ENCODE measurements at regions of chr2 and their contacts with region 1.

Region 1: GRCh38 chr2:163465440-163465839 is 270.4 kb downstream of the FIGN start:
- DNase-seq: no peak
- H3K4me3 ChIP-seq: no peak overlapping the region
- CTCF ChIP-seq: no peak
- POLR2A ChIP-seq: no peak

Region 2: DNA sequence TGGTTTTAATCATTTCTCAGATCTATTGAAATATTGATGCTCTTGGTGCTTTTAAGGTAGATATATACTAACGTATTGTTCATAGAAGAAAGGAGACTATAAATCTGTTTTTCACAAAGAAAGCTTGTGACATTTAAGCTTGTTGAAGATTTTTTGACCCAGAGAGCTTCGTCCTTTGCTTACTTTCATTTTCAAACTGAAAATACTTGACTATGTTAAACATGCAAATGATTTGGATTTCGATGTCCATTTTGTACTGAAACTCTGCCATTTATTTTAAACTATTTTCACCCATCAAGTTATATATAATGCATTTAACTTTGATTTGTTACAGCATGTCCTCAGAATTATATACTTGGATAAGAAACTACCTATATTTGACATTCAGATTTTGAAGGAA is 1756.0 kb before region 1 on chr2:
- intact Hi-C with region 1: loop called (anchors 10 kb)
- DNase-seq: no peak
- H3K4me3 ChIP-seq: no peak overlapping the region
- CTCF ChIP-seq: no peak
- POLR2A ChIP-seq: no peak

Region 3: DNA sequence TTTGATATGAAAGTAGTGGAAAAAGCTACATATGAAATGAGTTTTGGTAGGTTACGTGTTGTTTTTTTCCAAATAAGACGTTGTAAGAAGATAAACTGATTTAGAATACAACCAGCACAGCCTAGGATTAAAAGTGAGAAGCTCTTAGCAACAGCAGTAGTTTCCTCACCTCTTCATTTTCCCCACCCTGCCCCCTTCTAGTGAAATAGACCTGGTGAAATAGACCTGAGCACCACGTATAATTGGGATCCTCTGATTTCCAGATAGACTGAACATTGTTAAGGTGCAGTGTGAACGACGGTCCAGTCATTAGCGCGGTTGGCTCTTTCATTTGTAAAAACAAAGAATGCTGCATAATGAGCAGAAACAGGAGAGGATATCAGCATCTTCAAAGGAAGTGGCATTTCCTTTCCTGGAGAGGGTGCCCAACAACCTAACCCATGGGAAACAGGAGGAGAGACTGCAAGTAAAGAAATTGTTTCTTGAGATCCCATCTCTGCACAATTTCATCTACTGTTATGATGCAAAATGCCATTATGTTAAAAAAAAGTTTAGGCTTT is 156.1 kb after region 1 on chr2:
- intact Hi-C with region 1: no loop called
- DNase-seq: no peak
- H3K4me3 ChIP-seq: no peak overlapping the region
- CTCF ChIP-seq: no peak
- POLR2A ChIP-seq: no peak